ENCODE measurements at regions of chr9 and their contacts with region 1.

Region 1: GRCh38 chr9:136118320-136119060 is at the start of gene TMEM250:
- DNase-seq: peak; percentile 97
- H3K4me3 ChIP-seq: peak within 1 kb of the TSS; percentile 80
- H3K27ac ChIP-seq: peak within 1 kb of the TSS; percentile 57
- H3K4me1 ChIP-seq: peaks cover 17% of the 10 kb centered on the region
- CTCF ChIP-seq: no peak
- total RNA-seq, gene TMEM250: 38.4 and 51.0 TPM in 2 replicates

Region 2: GRCh38 chr9:135864447-135865049 is 253.9 kb before region 1 on chr9:
- CTCF ChIA-PET with region 1: no interaction called
- POLR2A ChIA-PET with region 1: no interaction called
- intact Hi-C with region 1: loop called (anchors 5 kb)
- DNase-seq: peak; percentile 60
- H3K4me3 ChIP-seq: no peak overlapping the region
- H3K27ac ChIP-seq: no peak overlapping the region
- H3K4me1 ChIP-seq: peaks cover 7% of the 10 kb centered on the region
- CTCF ChIP-seq: peak; percentile 96

Region 3: DNA sequence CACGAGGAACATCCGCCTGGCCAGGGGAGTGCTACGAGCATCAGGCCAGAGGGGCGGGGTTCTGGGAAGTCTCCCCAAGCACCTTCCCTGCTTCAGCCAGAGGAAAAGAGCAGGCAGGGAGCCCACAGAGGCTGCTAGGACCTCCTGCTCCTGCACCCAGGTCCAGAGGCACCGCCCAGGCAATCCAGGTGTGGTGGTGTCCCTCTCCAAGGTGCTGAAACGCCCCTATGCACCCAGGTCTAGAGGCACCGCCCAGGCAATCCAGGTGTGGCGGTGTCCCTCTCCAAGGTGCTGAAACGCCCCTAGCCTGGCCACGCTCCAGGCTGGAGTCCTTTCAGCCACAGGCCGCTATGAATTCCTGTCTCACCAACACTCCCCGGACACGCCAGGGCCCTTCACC is 146.6 kb before region 1 on chr9:
- CTCF ChIA-PET with region 1: no interaction called
- POLR2A ChIA-PET with region 1: no interaction called
- intact Hi-C with region 1: loop called (anchors 1 kb)
- DNase-seq: peak; percentile 75
- H3K4me3 ChIP-seq: no peak overlapping the region
- H3K27ac ChIP-seq: no peak overlapping the region
- H3K4me1 ChIP-seq: peaks cover 4% of the 10 kb centered on the region
- CTCF ChIP-seq: no peak

Region 4: DNA sequence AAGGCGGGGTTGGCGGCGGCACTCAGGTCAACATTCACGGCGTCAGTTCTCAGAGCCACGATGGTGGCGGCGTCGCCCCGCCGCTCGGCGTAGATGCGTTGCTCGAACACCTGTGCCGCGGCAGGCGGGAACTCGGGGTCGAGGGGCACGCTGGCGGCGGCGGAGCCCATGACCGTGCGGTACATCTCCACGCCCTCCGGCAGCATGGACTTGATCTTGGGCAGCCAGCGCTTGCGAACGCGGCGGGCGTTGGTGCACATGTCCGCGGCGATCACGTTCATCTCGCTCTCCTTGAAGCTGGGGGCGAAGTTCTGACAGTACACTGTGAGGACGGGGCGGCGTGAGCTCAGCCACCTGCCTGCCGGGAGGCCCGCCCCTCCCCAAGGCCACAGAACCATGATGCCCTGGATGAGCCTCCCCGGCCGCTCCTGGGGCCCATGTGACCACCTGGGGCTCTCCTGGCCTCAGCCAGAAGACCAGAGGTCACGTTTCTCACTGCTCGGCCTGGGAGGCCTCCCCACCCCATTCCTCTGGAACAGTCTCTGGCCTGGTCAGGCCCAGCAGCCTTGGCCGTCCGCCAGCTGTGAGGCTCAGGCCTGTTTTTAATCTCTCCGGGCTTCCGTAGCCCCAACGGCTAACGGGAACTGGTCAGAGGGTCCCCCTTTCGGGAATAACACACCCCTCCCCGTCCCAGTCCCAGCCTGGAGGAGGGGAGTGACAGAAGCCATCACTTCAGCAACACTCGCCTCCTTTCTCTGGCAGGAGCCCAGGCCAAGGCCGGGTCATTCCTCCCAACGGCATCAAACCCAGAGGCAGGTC is 106.6 kb before region 1 on chr9:
- CTCF ChIA-PET with region 1: no interaction called
- POLR2A ChIA-PET with region 1: no interaction called
- intact Hi-C with region 1: loop called (anchors 1 kb)
- DNase-seq: peak; percentile 24
- H3K4me3 ChIP-seq: peak overlapping the region; percentile 69
- H3K27ac ChIP-seq: peak overlapping the region; percentile 100
- H3K4me1 ChIP-seq: peaks cover 66% of the 10 kb centered on the region
- CTCF ChIP-seq: no peak

Region 5: GRCh38 chr9:136051517-136052432 is 66.7 kb before region 1 on chr9:
- CTCF ChIA-PET with region 1: no interaction called
- POLR2A ChIA-PET with region 1: no interaction called
- intact Hi-C with region 1: no loop called
- DNase-seq: no peak
- H3K4me3 ChIP-seq: no peak overlapping the region
- H3K27ac ChIP-seq: no peak overlapping the region
- H3K4me1 ChIP-seq: no peaks in the 10 kb centered on the region
- CTCF ChIP-seq: no peak

Measured in OCI-LY7 (cell line).